ENCODE measurements at regions of chr1 and their contacts with region 1.

Region 1: DNA sequence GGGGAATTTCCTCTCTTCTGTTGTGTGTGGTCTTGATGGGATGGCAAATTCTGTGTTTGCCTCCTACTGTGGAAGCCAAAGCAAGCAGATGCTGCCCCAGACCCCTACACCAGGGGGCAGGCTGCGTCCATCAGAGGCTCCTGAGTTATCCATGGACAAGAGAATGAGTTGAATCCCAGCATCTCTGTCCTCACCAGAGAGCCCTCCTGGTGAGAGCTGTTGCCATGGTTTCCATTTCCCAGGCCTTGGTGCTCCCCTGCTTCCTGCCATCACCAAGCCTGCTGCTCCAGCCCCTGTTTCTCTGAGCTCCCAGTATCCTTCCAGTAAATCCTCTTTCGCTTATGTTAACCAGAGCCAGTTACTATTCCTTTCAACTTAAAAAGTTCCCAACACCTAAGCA is 20.4 kb upstream of the GNG12 start:
- DNase-seq: peak; percentile 50 to 80 (median 73)
- ATAC-seq: peak; percentile 69
- H3K4me3 ChIP-seq: no peak overlapping the region
- H3K4me1 ChIP-seq: peaks cover 3% of the 10 kb centered on the region
- CTCF ChIP-seq: peak; percentile 52

Region 2: DNA sequence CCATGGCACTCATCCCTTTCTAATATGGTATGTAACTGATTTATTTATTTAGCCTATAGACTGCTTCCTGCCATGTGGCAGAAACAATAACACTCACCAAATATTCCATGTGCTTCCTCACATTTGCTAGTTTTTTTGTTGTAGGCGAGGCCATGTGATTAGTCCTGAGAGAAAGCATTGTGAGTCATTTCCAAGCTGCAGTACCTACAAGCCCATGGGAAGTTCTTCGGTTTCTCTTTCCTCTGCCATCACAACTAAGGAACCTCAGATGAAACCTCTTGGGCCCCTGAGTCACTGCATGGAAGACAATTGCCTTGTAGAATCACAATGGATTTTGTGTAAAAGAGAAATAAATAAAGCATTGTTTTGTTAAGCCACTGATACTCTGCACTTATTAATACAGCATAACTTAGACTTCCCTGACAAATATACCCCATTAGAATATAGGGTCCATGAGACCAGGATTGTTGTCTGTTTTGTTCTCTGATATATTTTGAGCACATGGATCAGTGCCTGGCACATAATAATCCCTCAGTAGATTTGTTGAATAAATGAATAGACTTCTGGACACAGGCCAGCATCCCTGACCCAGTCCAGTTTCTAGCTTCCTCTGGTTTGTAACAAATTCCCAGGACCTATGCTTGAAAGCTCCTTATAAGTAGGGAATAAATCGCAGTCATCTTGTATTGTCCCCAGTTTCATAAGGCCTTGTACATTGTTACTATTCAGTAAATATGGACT is 227.0 kb before region 1 on chr1:
- intact Hi-C with region 1: no loop called
- DNase-seq: no peak
- ATAC-seq: peak; percentile 81
- H3K4me3 ChIP-seq: no peak overlapping the region
- H3K4me1 ChIP-seq: peaks cover 6% of the 10 kb centered on the region
- CTCF ChIP-seq: no peak

Region 3: GRCh38 chr1:68093737-68094136 is 240.0 kb after region 1 on chr1:
- intact Hi-C with region 1: no loop called
- DNase-seq: no peak
- ATAC-seq: peak; percentile 60
- H3K4me3 ChIP-seq: no peak overlapping the region
- H3K4me1 ChIP-seq: no peaks in the 10 kb centered on the region
- CTCF ChIP-seq: no peak

Region 4: GRCh38 chr1:68111519-68112436 is 258.1 kb after region 1 on chr1:
- intact Hi-C with region 1: loop called (anchors 5 to 10 kb)
- DNase-seq: peak; percentile 67 to 75 (median 72)
- ATAC-seq: peak; percentile 93
- H3K4me3 ChIP-seq: no peak overlapping the region
- H3K4me1 ChIP-seq: no peaks in the 10 kb centered on the region
- CTCF ChIP-seq: peak; percentile 29

Measured in mucosa of descending colon (tissue), 3 donors.